ENCODE measurements at regions of chr21 and their contacts with region 1.

Region 1: GRCh38 chr21:45404730-45405270 is at the start of gene COL18A1:
- DNase-seq: peak in 5 of 9 experiments; percentile 9 to 54 (median 40)
- ATAC-seq: peak; percentile 61
- H3K4me3 ChIP-seq: peak within 1 kb of the TSS; percentile 30 to 39
- H3K4me3 Mint-ChIP-seq: peak within 1 kb of the TSS; percentile 86
- H3K27ac ChIP-seq: no peak within 1 kb of the TSS
- H3K27ac Mint-ChIP-seq: no peak within 1 kb of the TSS
- H3K4me1 ChIP-seq: peaks cover 8% of the 10 kb centered on the region
- H3K4me1 Mint-ChIP-seq: peaks cover 16% of the 10 kb centered on the region
- H3K27me3 ChIP-seq: peaks cover 14% of the 10 kb centered on the region in 2 experiments
- H3K27me3 Mint-ChIP-seq: peaks cover 57% of the 10 kb centered on the region
- CTCF ChIP-seq: no peak
- total RNA-seq, gene COL18A1: 60.7 to 65.3 TPM

Region 2: DNA sequence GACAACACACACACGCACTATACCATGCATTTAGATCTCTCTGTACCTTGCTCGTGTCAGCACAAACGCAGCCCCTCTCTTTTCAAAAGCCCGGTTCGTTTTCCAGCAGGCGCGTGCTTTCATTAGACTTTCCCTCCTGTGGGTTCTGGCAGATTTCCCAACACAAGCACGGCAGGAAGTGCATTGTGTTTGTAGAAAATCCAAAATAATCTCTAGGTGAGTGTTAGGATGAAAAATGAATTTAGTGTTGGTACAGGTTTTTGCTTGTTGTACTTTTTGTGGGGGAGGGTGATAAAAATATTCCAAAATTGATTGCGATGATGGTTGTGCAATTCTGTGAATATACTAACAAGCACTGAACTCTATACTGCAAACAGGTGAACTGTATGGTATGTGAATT is 63.0 kb before region 1 on chr21:
- CTCF ChIA-PET with region 1: no interaction called
- POLR2A ChIA-PET with region 1: no interaction called
- intact Hi-C with region 1: loop called in 1 of 2 experiments (anchors 10 kb)
- DNase-seq: no peak
- ATAC-seq: no peak
- H3K4me3 ChIP-seq: no peak overlapping the region
- H3K4me3 Mint-ChIP-seq: no peak overlapping the region
- H3K27ac ChIP-seq: no peak overlapping the region
- H3K27ac Mint-ChIP-seq: no peak overlapping the region
- H3K4me1 ChIP-seq: no peaks in the 10 kb centered on the region
- H3K4me1 Mint-ChIP-seq: no peaks in the 10 kb centered on the region
- H3K27me3 ChIP-seq: no peaks in the 10 kb centered on the region
- H3K27me3 Mint-ChIP-seq: peaks cover 12% of the 10 kb centered on the region
- CTCF ChIP-seq: no peak

Region 3: GRCh38 chr21:46273341-46273740 is 868.5 kb after region 1 on chr21:
- CTCF ChIA-PET with region 1: no interaction called
- POLR2A ChIA-PET with region 1: no interaction called
- intact Hi-C with region 1: no loop called
- DNase-seq: no peak
- ATAC-seq: no peak
- H3K4me3 ChIP-seq: no peak overlapping the region
- H3K4me3 Mint-ChIP-seq: no peak overlapping the region
- H3K27ac ChIP-seq: no peak overlapping the region
- H3K27ac Mint-ChIP-seq: no peak overlapping the region
- H3K4me1 ChIP-seq: no peaks in the 10 kb centered on the region
- H3K4me1 Mint-ChIP-seq: peaks cover 6% of the 10 kb centered on the region
- H3K27me3 ChIP-seq: no peaks in the 10 kb centered on the region
- H3K27me3 Mint-ChIP-seq: no peaks in the 10 kb centered on the region
- CTCF ChIP-seq: no peak

Measured in CD8-positive, alpha-beta T cell (primary cell).